Ovary (tissue), 10 donors: ENCODE measurements at regions of chr4 and their contacts with region 1.

Region 1: GRCh38 chr4:94595879-94596483 is 144.2 kb downstream of the PDLIM5 start:
- DNase-seq: no peak
- H3K4me3 ChIP-seq: no peak overlapping the region
- H3K27ac ChIP-seq: no peak overlapping the region
- H3K4me1 ChIP-seq: peaks cover 3% of the 10 kb centered on the region
- H3K27me3 ChIP-seq: no peaks in the 10 kb centered on the region
- CTCF ChIP-seq: peak in 2 of 3 donors; percentile 55 to 71
- EP300 ChIP-seq: no peak
- POLR2A ChIP-seq: no peak

Region 2: GRCh38 chr4:94406668-94407437 is 189.1 kb before region 1 on chr4:
- intact Hi-C with region 1: loop called (anchors 5 to 10 kb)
- DNase-seq: peak; percentile 62 to 84 (median 72)
- H3K4me3 ChIP-seq: no peak overlapping the region
- H3K27ac ChIP-seq: no peak overlapping the region
- H3K4me1 ChIP-seq: peaks cover 1% of the 10 kb centered on the region
- H3K27me3 ChIP-seq: no peaks in the 10 kb centered on the region
- CTCF ChIP-seq: peak; percentile 49 to 67 (median 61)
- EP300 ChIP-seq: no peak
- POLR2A ChIP-seq: no peak

Region 3: DNA sequence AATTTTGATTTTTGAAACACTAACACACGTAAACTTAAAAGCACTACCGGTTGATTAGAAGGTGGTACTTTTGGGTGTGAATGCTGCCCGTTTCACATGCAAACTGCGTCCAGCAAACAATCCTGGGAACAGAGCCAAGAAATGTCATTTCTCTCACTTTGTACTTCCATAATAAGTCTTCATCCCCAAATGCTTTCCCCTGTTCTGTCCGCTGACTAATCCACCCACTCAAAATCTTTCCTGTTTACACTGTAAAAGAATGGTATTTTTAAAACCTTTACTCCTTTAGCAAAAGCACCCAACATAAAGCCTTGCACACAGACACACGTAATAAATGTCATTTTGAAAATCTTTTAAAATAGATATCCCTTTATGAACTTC is 183.3 kb before region 1 on chr4:
- intact Hi-C with region 1: loop called (anchors 5 to 10 kb)
- DNase-seq: peak in 2 of 5 donors; percentile 12 to 16
- H3K4me3 ChIP-seq: peak overlapping the region; percentile 10
- H3K27ac ChIP-seq: peak overlapping the region in 1 of 2 donors; percentile 23
- H3K4me1 ChIP-seq: peaks cover 3% of the 10 kb centered on the region
- H3K27me3 ChIP-seq: no peaks in the 10 kb centered on the region
- CTCF ChIP-seq: no peak
- EP300 ChIP-seq: no peak
- POLR2A ChIP-seq: no peak

Region 4: GRCh38 chr4:94621491-94622080 is 25.6 kb after region 1 on chr4:
- intact Hi-C with region 1: no loop called
- DNase-seq: peak in 1 of 5 donors; percentile 25
- H3K4me3 ChIP-seq: no peak overlapping the region
- H3K27ac ChIP-seq: peak overlapping the region in 1 of 2 donors; percentile 29
- H3K4me1 ChIP-seq: no peaks in the 10 kb centered on the region
- H3K27me3 ChIP-seq: no peaks in the 10 kb centered on the region
- CTCF ChIP-seq: peak; percentile 61 to 77 (median 65)
- EP300 ChIP-seq: no peak
- POLR2A ChIP-seq: no peak